ENCODE measurements at regions of chr6 and their contacts with region 1.

Region 1: DNA sequence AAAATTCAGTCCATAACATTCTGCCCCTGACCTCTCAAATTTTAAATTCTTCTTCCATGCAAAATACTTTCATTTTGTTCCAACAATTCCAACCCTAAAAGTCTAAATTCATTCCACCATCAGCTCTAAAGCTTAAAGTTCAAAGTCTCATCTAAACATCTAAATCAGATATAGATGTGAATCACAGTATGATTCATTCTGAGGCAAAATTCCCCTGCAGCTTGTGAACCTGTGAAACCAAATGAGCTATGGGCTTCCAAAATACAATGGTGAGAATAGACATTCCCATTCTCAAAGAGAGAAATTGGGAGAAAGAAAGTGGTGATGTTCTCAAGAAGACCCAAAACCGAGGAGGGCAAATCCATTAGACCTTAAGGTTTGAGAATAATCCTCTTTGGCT is 309.8 kb downstream of the HIVEP2 start:
- DNase-seq: no peak
- ATAC-seq: no peak
- H3K4me3 Mint-ChIP-seq: no peak overlapping the region
- H3K27ac Mint-ChIP-seq: no peak overlapping the region
- H3K4me1 Mint-ChIP-seq: peaks cover 2% of the 10 kb centered on the region
- H3K27me3 Mint-ChIP-seq: no peaks in the 10 kb centered on the region
- CTCF ChIP-seq: no peak

Region 2: GRCh38 chr6:142686507-142686887 is 51.4 kb after region 1 on chr6:
- CTCF ChIA-PET with region 1: no interaction called
- POLR2A ChIA-PET with region 1: no interaction called
- intact Hi-C with region 1: loop called (anchors 2 kb)
- DNase-seq: no peak
- ATAC-seq: peak; percentile 30
- H3K4me3 Mint-ChIP-seq: no peak overlapping the region
- H3K27ac Mint-ChIP-seq: no peak overlapping the region
- H3K4me1 Mint-ChIP-seq: peaks cover 24% of the 10 kb centered on the region
- H3K27me3 Mint-ChIP-seq: no peaks in the 10 kb centered on the region
- CTCF ChIP-seq: no peak